Posterior vena cava (tissue), 2 donors: ENCODE measurements at regions of chr1 and their contacts with region 1.

Region 1: DNA sequence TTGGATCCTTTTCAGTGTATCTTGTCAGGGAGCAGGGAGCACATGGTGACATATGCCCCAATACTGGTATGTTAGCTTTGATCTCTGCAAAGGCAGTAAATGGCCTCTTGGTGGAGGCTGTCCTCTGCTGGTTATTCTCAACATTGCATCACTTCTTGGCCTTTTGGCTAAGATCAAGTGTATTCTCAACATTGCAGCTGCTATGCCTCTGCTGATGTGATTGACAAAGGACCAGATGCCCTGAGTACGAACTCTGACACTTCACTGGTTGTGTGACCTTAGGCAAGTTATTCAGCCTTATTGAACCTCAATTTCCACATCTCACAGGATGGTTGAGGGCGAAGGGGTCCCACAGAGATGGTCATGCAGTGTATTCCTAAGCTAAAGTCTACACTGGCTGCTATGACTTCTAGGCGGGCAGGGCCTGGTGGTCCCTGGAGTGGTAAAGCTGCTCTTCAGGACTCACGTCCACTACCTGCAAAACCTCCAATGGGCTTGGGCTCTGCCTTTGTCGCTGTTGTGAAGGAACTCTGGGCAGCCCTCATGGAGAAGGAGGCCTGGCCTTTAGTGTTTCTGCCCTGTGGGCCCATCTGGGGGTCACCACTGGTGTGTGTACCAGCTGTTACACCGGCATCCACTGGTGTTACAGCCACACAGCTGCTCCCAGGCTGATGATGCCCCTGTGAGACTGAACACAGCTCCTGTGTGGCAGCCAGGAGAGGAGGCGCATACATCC is 64.8 kb downstream of the DNTTIP2 start:
- DNase-seq: no peak

Region 2: DNA sequence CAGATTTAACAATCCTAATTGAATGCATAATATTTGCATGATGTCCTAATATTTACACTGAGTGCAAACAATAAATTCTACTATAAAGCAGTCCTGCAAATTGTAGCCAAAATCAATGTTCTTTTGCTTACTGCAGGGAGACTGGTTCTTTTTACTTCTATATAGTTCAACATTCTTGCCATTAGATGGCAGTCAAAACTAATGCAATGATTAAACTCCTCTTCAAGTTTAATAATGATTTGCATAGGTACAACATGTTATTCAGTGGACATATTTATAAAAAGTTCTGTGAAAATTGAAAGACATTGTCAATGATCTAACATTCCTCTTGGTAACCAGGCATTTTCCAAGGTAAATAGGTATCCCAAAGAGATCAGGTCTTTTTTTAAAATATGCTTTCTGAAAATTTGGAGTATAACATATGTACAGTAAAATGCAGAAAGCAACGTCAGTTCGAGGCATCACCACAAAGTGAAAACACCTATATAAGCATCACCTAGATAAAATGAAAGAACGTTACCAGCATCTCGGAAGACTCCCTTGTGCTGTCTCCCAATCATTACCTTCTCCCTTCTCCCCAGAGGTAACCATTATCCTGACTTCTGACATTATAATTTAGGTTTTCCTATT is 376.1 kb before region 1 on chr1:
- intact Hi-C with region 1: loop called (anchors 10 kb)
- DNase-seq: no peak

Region 3: GRCh38 chr1:93447516-93448291 is 366.5 kb before region 1 on chr1 and contains the start of gene FNBP1L:
- intact Hi-C with region 1: loop called in 1 of 2 experiments (anchors 10 kb)
- DNase-seq: peak; percentile 89
- total RNA-seq, gene FNBP1L: 9.3 to 11.3 TPM

Region 4: DNA sequence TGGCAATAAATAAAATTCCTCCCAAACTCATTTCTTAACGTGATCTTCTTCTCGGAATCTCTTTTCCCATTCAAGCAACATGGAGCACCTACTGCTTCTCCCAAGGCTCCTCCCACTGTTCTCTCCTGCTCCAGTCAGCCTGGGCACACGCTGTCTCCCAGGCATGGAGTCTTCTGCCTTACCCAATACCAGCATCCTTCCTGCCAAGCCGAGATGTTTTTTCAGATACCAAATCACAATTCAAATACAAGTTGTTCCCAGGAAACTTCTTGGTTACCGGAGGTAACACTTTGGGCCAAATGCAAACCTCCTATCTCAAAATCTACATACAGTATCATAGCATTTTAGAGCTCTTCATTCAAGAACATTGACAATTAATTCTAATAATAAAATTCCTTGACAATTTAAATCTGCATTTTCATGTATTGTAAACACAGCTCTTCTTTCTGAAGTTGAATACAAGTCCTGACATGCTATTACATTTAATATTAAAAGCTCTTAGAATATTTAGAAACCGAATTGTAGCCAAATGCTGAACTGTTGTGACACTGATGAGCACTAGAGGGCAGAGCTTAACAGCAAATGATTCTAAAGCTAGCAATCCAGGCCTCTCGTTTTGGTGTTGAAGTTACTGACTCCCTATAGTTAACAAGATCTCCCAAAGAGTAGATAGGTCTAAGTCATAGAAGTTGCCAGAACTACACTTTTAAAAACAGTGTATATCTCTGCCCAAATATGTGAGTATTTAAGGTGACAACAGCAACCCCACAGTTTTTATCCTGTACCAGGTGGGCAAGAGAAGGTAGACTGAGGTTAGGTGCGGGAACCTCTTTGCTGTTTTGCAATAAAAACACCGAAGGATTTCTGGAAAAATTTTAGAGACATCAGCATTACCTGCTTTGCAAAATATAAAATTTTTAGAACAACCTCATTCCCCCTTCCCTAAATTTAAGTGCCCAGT is 184.8 kb before region 1 on chr1:
- intact Hi-C with region 1: loop called (anchors 2 to 10 kb)
- DNase-seq: no peak

Region 5: GRCh38 chr1:93749894-93750301 is 64.3 kb before region 1 on chr1:
- intact Hi-C with region 1: no loop called
- DNase-seq: no peak

Region 6: DNA sequence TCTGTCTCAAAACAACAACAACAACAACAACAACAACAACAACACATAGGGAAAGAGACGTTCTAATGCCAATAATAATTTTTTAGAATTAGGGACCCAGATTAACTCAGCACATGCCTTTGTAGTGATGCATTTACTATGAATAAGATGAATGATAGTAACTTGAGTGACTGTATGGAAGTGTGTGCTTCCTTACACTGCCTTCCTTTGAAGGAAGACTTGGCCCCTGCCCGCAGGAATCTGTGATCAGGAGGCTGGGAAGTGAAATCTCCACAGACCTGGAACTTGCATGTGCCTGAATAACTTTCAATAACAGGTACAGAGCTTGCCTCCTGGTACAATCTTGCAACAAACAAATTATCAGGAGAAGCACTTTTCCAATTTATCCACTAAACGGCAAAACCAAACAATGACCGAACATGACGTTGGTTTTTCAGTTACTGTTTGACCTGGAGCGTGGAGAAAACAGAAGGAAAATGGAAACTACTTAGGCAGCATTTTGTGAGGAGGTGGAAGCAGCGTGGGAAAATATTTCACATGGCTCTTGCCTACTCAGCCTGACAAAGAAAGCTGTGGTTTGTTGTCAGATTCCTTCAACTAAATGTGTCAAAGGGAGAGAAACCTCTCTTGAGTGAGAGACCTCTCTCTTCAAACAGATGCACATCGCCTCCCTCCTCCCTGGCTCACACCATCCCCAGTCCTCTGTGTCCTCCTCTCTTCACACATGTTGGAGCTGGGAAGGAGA is 316.8 kb after region 1 on chr1:
- intact Hi-C with region 1: no loop called
- DNase-seq: no peak